Panc1 (cell line): ENCODE measurements at regions of chr1 and their contacts with region 1.

Region 1: GRCh38 chr1:179663810-179664209 is 72.2 kb downstream of the TDRD5 start:
- DNase-seq: no peak
- ATAC-seq: no peak
- H3K4me3 ChIP-seq: no peak overlapping the region
- H3K27ac ChIP-seq: no peak overlapping the region
- H3K4me1 ChIP-seq: no peaks in the 10 kb centered on the region
- H3K27me3 ChIP-seq: no peaks in the 10 kb centered on the region; the same call in 1 of the 2 replicates
- CTCF ChIP-seq: no peak

Region 2: GRCh38 chr1:179840107-179840506 is 176.3 kb after region 1 on chr1:
- CTCF ChIA-PET with region 1: no interaction called
- POLR2A ChIA-PET with region 1: interaction called, 11 read pairs
- in situ Hi-C with region 1: no loop called
- intact Hi-C with region 1: no loop called
- DNase-seq: no peak
- ATAC-seq: no peak
- H3K4me3 ChIP-seq: no peak overlapping the region
- H3K27ac ChIP-seq: no peak overlapping the region
- H3K4me1 ChIP-seq: no peaks in the 10 kb centered on the region
- H3K27me3 ChIP-seq: no peaks in the 10 kb centered on the region
- CTCF ChIP-seq: no peak